CD4-positive, alpha-beta memory T cell (primary cell): ENCODE measurements at regions of chr6 and their contacts with region 1.

Region 1: GRCh38 chr6:143450453-143451371 is at the starts of genes ADAT2 and PEX3:
- DNase-seq: peak; percentile 94 to 95 (median 94)
- H3K4me3 ChIP-seq: peak within 1 kb of the TSS; percentile 95 to 99
- H3K4me3 Mint-ChIP-seq: peak within 1 kb of the TSS; percentile 94 to 100 (median 98)
- H3K27ac ChIP-seq: peak within 1 kb of the TSS; percentile 67
- H3K27ac Mint-ChIP-seq: peak within 1 kb of the TSS; percentile 86 to 99 (median 97)
- H3K4me1 ChIP-seq: peaks cover 28% of the 10 kb centered on the region
- H3K4me1 Mint-ChIP-seq: peaks cover 25 to 49% (median 36%) of the 10 kb centered on the region in 4 donors
- H3K27me3 ChIP-seq: no peaks in the 10 kb centered on the region
- H3K27me3 Mint-ChIP-seq: no peaks in the 10 kb centered on the region
- total RNA-seq, gene ADAT2: 10.5 to 11.2 TPM
- total RNA-seq, gene PEX3: 20.8 to 23.5 TPM

Region 2: GRCh38 chr6:143842902-143843676 is 392.4 kb after region 1 on chr6 and contains the start of gene LTV1:
- CTCF ChIA-PET with region 1: no interaction called
- POLR2A ChIA-PET with region 1: interaction called, 21 read pairs
- intact Hi-C with region 1: loop called (anchors 1 kb)
- DNase-seq: peak; percentile 89 to 92 (median 90)
- H3K4me3 ChIP-seq: peak within 1 kb of the TSS; percentile 54 to 90
- H3K4me3 Mint-ChIP-seq: peak within 1 kb of the TSS; percentile 93 to 97 (median 95)
- H3K27ac ChIP-seq: peak within 1 kb of the TSS; percentile 92
- H3K27ac Mint-ChIP-seq: peak within 1 kb of the TSS; percentile 96 to 99 (median 98)
- H3K4me1 ChIP-seq: peaks cover 15% of the 10 kb centered on the region
- H3K4me1 Mint-ChIP-seq: peaks cover 19 to 32% (median 25%) of the 10 kb centered on the region in 4 donors
- H3K27me3 ChIP-seq: no peaks in the 10 kb centered on the region
- H3K27me3 Mint-ChIP-seq: no peaks in the 10 kb centered on the region
- total RNA-seq, gene LTV1: 19.9 to 20.8 TPM

Region 3: DNA sequence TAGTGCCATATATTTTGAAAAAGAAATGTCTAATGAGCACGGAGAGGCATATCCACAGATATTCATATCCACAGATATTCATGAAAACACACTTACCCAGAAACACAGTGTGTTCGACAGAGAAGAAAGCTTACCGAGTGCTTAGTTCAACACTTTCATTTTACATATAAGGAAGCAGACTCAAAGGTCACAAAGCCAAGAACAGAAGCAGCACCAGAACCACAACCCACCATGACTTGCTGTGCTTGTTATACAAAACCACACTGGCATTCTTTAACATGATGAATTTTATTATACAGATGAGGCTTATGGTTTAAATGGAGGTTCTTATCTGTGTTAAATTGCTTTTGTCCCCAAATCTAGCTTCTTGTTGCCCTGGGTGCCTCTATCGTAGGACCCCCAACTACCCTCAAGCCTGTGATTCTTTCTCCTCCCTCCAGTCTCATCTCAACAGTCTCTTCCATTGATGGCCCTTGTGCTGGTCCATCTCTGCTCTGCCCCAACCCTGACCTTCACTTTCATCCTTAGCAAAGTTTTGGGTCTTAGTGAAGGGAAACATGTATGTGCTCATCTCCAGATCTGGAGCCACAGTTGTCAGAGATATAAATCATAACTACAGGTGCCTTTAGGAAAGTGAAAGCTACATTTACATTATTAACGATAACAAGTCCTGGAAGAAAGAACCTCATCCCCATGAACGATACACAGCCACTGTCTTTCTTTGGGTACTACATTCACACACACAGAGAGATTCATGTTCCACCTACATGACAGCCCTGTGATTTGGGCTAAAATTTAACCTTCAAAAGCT is 604.6 kb after region 1 on chr6:
- CTCF ChIA-PET with region 1: no interaction called
- POLR2A ChIA-PET with region 1: interaction called, 3 read pairs
- intact Hi-C with region 1: loop called (anchors 1 kb)
- DNase-seq: peak; percentile 61 to 77 (median 72)
- H3K4me3 ChIP-seq: peak overlapping the region in 1 of 2 donors; percentile 46
- H3K4me3 Mint-ChIP-seq: peak overlapping the region; percentile 77 to 95 (median 89)
- H3K27ac ChIP-seq: peak overlapping the region; percentile 54
- H3K27ac Mint-ChIP-seq: peak overlapping the region; percentile 79 to 98 (median 96)
- H3K4me1 ChIP-seq: peaks cover 33% of the 10 kb centered on the region
- H3K4me1 Mint-ChIP-seq: peaks cover 28 to 39% (median 33%) of the 10 kb centered on the region in 4 donors
- H3K27me3 ChIP-seq: no peaks in the 10 kb centered on the region
- H3K27me3 Mint-ChIP-seq: no peaks in the 10 kb centered on the region